HCT116 (cell line): ENCODE measurements at regions of chr6 and their contacts with region 1.

Region 1: DNA sequence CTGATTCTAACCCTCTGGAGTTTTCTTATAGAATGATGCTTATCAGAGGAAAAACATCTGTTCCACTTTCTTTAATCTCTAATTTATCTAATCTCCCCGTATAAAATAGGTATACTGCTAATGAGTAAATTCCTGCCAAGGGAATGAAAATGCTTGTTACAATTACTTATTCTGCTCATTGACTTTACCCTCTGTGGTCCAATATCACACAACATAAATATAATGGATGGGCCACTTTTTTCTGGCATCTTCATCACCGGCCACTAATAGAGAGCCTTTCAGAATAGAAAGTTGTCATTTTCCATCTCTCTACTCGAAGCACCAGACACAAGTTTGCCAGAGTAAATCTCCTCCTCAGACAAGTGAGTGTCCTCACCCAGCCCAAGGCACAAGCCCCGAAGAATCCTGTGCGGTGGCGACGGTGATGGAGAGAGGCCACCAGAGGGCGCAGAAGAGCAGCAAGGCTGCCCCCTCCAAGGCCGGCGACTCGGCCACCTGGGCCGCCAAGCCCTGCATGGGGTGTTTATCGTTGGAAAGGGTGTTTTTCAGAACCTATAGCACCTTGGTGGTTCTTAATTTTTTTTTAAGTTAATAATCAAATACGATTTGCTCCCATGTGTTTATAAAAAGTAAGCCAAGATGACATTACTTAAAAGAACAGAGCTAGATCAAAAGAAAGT is 212.9 kb upstream of the ARID1B start:
- DNase-seq: peak; percentile 40
- ATAC-seq: peak; percentile 100
- H3K4me3 ChIP-seq: no peak overlapping the region
- H3K27ac ChIP-seq: no peak overlapping the region
- H3K4me1 ChIP-seq: no peaks in the 10 kb centered on the region
- H3K27me3 ChIP-seq: no peaks in the 10 kb centered on the region
- CTCF ChIP-seq: peak; percentile 85 to 95 (median 93); a peak in 5 of 6 replicates
- POLR2A ChIP-seq: no peak
- RAD21 ChIP-seq: peak; percentile 91

Region 2: DNA sequence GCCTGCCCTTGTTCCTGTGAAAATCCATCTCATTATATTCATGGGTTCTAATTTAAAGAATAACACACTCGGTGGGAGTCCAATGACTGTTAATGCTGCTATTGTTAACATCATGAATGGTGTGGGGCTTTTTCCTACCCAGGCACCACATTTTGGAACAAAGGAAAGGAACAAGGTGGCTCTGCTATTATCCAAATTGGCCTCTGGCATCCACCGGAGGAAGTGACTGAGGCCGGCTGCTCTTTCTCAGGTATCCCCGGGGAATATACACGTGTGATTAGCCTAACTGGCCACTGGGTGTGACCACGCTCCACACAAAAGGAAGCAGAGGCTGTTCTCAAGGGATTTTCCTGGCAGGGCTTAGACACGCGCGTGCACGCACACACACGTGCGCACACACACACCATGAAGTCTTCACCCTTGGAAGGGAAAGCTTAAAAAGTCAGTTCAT is 388.3 kb before region 1 on chr6:
- CTCF ChIA-PET with region 1: no interaction called
- POLR2A ChIA-PET with region 1: no interaction called
- RAD21 ChIA-PET with region 1: no interaction called
- intact Hi-C with region 1: loop called (anchors 5 kb)
- DNase-seq: peak; percentile 38
- ATAC-seq: peak; percentile 91
- H3K4me3 ChIP-seq: no peak overlapping the region
- H3K27ac ChIP-seq: no peak overlapping the region
- H3K4me1 ChIP-seq: no peaks in the 10 kb centered on the region
- H3K27me3 ChIP-seq: no peaks in the 10 kb centered on the region
- CTCF ChIP-seq: peak; percentile 31 to 56 (median 42); a peak in 4 of 6 replicates
- POLR2A ChIP-seq: no peak
- RAD21 ChIP-seq: peak; percentile 56

Region 3: GRCh38 chr6:156776840-156777576 is 212.7 kb after region 1 on chr6 and contains the start of gene ARID1B:
- CTCF ChIA-PET with region 1: no interaction called
- POLR2A ChIA-PET with region 1: no interaction called
- RAD21 ChIA-PET with region 1: no interaction called
- intact Hi-C with region 1: loop called (anchors 5 kb)
- DNase-seq: no peak
- ATAC-seq: peak; percentile 50
- H3K4me3 ChIP-seq: peak within 1 kb of the TSS; percentile 70 to 77
- H3K27ac ChIP-seq: peak within 1 kb of the TSS; percentile 95
- H3K4me1 ChIP-seq: peaks cover 27 to 40% of the 10 kb centered on the region in 2 experiments
- H3K27me3 ChIP-seq: no peaks in the 10 kb centered on the region
- CTCF ChIP-seq: no peak
- POLR2A ChIP-seq: peak; percentile 58
- RAD21 ChIP-seq: no peak
- total RNA-seq, gene ARID1B: 35.6 TPM

Region 4: DNA sequence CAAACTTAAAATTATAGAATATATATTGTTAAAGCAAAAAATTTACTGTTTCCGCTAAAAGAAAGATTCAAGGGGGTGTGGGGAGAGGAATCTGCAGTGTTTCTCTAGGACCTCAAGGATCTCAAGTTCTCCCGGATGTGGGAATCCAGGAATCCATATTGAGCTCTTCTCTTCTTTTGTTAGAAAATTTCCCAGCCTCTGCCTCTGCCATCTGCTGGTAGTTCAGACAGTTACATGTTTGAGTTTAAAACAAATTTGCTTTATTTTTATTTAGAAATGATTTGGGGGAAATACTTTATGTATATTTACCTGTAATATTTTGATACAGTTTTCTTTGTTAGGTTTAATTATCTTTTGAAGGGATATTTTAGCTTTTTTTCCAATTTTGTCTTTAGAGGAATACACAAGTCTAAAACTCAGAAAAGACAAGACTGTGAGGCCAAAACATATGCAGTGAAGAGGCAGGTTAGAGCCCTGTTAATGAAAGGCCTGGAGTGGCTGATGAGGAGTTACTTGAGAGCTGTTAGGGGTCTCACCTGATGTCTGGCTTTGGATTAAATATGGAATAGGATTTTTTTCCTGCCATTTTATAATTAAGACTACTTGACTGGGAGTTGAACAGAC is 481.7 kb after region 1 on chr6:
- CTCF ChIA-PET with region 1: interaction called, 3 read pairs
- POLR2A ChIA-PET with region 1: no interaction called
- RAD21 ChIA-PET with region 1: no interaction called
- intact Hi-C with region 1: loop called (anchors 10 kb)
- DNase-seq: peak; percentile 41
- ATAC-seq: peak; percentile 81
- H3K4me3 ChIP-seq: no peak overlapping the region
- H3K27ac ChIP-seq: no peak overlapping the region
- H3K4me1 ChIP-seq: peaks cover 0 to 3% of the 10 kb centered on the region in 2 experiments; a peak in 1 of 4 replicates
- H3K27me3 ChIP-seq: no peaks in the 10 kb centered on the region
- CTCF ChIP-seq: peak; percentile 55 to 67 (median 67)
- POLR2A ChIP-seq: no peak
- RAD21 ChIP-seq: peak; percentile 60

Region 5: GRCh38 chr6:157274471-157275226 is 710.4 kb after region 1 on chr6:
- CTCF ChIA-PET with region 1: no interaction called
- POLR2A ChIA-PET with region 1: no interaction called
- RAD21 ChIA-PET with region 1: no interaction called
- intact Hi-C with region 1: loop called (anchors 2 kb)
- DNase-seq: peak; percentile 31
- ATAC-seq: peak; percentile 87
- H3K4me3 ChIP-seq: peak overlapping the region; percentile 52 to 67
- H3K27ac ChIP-seq: peak overlapping the region; percentile 51; the same call in 1 of the 2 replicates
- H3K4me1 ChIP-seq: peaks cover 10 to 26% of the 10 kb centered on the region in 2 experiments; a peak in 3 of 4 replicates
- H3K27me3 ChIP-seq: no peaks in the 10 kb centered on the region
- CTCF ChIP-seq: peak; percentile 24 to 62 (median 44); a peak in 5 of 6 replicates
- POLR2A ChIP-seq: no peak
- RAD21 ChIP-seq: peak; percentile 64

Region 6: GRCh38 chr6:157644043-157644810 is 1080.0 kb after region 1 on chr6:
- CTCF ChIA-PET with region 1: no interaction called
- POLR2A ChIA-PET with region 1: no interaction called
- RAD21 ChIA-PET with region 1: no interaction called
- intact Hi-C with region 1: no loop called
- DNase-seq: no peak
- ATAC-seq: peak; percentile 78
- H3K4me3 ChIP-seq: no peak overlapping the region
- H3K27ac ChIP-seq: no peak overlapping the region
- H3K4me1 ChIP-seq: peaks cover 7 to 9% of the 10 kb centered on the region in 2 experiments; a peak in 3 of 4 replicates
- H3K27me3 ChIP-seq: no peaks in the 10 kb centered on the region
- CTCF ChIP-seq: peak; percentile 31 to 49 (median 42); a peak in 5 of 6 replicates
- POLR2A ChIP-seq: no peak
- RAD21 ChIP-seq: peak; percentile 75